ENCODE measurements at regions of chr12 and their contacts with region 1.

Region 1: DNA sequence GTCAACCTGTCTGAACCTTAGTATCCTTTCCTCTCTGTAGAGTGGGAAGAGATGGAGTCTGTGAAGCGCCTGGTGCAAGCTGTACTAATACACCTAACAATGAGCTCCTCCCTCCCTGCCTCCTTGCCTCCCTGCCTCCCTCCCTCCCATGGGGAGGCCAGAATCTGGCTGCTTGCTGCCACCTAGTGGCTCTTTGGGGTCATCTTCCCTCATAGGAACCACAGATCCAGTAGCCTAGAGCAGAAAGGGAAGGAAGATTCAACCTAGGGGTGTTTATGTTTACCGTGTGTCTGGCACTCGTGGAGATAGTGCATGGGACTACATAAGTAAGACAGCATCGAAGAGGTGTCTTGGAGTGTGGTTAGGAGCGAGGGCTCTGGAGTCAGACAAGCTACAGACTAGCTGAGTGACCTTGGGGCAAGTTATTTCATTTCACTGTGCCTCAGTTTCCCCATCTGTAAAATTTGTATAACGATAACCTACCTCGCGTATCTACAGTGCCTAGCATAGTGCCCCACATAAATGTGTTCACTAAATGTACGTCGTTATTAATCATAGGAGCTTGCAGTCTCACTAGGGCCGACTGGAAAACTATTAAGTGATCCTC is 35.5 kb upstream of the TSPAN9 start:
- DNase-seq: peak in 7 of 9 donors; percentile 19 to 58 (median 29)
- ATAC-seq: peak; percentile 76
- H3K4me3 ChIP-seq: no peak overlapping the region
- H3K4me3 Mint-ChIP-seq: no peak overlapping the region
- H3K27ac ChIP-seq: no peak overlapping the region
- H3K27ac Mint-ChIP-seq: no peak overlapping the region
- H3K4me1 ChIP-seq: no peaks in the 10 kb centered on the region
- H3K4me1 Mint-ChIP-seq: peaks cover 0 to 5% (median 0%) of the 10 kb centered on the region in 7 donors
- H3K27me3 ChIP-seq: peaks cover 0 to 2% of the 10 kb centered on the region in 2 donors
- H3K27me3 Mint-ChIP-seq: peaks cover 15 to 40% (median 23%) of the 10 kb centered on the region in 5 donors

Region 2: DNA sequence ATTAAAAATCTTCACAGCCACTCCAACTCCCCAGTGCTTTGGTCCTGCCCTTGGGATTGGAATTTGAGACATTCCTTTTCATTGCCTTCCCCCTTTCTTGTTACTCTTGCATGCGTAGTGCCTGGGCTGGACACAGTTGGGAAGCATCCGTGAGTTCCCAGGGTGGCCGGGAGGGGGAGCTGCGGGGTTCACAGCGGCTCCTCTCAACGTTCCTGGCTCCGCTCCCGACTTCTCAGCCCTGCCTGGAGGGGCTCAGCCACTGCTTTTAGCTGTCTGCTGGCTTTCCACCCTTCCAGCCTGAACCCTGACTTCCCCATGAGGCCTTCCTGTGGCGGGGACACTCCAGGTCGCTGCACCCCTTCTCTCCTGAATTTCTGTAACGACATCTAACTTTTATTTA is 188.0 kb before region 1 on chr12:
- CTCF ChIA-PET with region 1: no interaction called
- POLR2A ChIA-PET with region 1: no interaction called
- intact Hi-C with region 1: loop called in 1 of 2 experiments (anchors 2 kb)
- DNase-seq: peak in 7 of 9 donors; percentile 12 to 56 (median 25)
- ATAC-seq: peak; percentile 74
- H3K4me3 ChIP-seq: no peak overlapping the region
- H3K4me3 Mint-ChIP-seq: no peak overlapping the region
- H3K27ac ChIP-seq: no peak overlapping the region
- H3K27ac Mint-ChIP-seq: peak overlapping the region in 2 of 9 donors; percentile 33 to 43
- H3K4me1 ChIP-seq: no peaks in the 10 kb centered on the region
- H3K4me1 Mint-ChIP-seq: peaks cover 0 to 5% (median 2%) of the 10 kb centered on the region in 7 donors
- H3K27me3 ChIP-seq: no peaks in the 10 kb centered on the region
- H3K27me3 Mint-ChIP-seq: no peaks in the 10 kb centered on the region